ENCODE measurements at regions of chr3 and their contacts with region 1.

Region 1: DNA sequence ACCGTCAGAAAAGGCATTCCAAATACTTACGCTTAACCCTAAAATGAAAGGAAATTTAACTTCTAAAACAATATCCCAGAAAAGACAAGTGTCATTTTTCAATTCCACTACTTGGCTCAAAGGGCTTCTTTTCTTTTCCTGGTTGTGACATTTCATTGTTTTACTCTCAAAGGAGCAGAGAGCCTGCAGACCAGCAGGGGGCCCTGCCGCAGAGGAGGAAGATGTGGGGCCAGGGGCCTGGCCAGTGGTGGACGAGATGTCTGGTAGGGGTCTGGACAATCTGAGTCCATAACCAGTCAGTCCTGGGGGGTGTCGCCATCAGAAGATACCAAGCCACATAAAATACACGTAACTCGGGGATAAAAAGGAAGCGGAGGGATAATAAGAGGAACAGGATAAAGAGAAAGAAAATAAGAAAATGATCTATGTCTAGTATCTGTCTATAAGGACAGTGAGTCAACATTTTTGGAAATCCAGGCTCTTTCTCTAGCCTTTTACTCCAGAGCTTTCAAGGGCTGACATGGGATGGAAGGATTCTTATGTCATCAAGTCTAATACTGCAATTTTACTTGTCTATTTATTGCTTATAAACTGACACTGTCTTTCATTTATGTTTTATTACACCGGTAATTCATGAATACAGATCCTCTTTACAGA is 54.2 kb upstream of the ARHGEF3 start:
- DNase-seq: peak; percentile 64
- H3K4me3 Mint-ChIP-seq: no peak overlapping the region
- H3K27ac Mint-ChIP-seq: no peak overlapping the region
- H3K4me1 Mint-ChIP-seq: peaks cover 55% of the 10 kb centered on the region
- H3K27me3 Mint-ChIP-seq: no peaks in the 10 kb centered on the region

Region 2: DNA sequence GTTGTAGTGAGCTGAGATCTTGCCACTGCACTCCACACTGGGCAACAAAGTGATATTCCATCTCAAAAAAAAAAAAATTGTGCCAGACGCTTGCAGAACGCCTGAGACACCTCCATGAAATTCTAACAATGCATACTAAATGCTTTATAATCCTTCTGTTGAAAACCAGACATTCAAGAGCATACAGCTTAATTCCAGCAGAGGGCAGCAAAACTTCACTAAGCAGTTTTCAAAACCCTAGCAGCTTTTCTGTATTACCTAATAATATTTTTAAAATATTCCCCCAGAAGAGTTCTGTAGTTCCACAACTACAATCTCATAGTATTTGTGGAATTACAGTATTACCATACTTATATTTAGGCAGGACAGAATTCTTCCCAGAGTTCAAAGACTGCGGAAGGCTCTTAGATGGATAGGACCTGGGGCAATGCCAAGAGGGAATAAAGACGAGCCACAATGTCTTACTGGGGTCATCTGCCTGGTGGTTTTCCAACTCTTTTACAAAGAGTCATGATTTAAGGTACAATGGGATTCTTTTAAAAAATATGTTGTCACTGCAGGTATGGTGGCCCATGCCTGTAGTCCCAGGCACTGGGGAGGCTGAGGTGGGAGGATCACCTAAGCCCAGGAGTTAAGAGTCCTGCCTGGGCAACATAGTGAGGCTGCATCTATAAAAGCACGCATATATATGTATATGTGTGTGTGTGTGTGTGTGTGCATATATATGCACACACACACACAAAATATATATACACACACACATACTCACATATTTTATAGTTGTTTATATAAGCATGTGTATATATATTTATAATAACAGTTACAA is 153.3 kb before region 1 on chr3:
- CTCF ChIA-PET with region 1: interaction called, 4 read pairs
- POLR2A ChIA-PET with region 1: no interaction called
- intact Hi-C with region 1: loop called (anchors 5 kb)
- DNase-seq: peak; percentile 36
- H3K4me3 Mint-ChIP-seq: no peak overlapping the region
- H3K27ac Mint-ChIP-seq: no peak overlapping the region
- H3K4me1 Mint-ChIP-seq: peaks cover 11% of the 10 kb centered on the region
- H3K27me3 Mint-ChIP-seq: no peaks in the 10 kb centered on the region

Region 3: DNA sequence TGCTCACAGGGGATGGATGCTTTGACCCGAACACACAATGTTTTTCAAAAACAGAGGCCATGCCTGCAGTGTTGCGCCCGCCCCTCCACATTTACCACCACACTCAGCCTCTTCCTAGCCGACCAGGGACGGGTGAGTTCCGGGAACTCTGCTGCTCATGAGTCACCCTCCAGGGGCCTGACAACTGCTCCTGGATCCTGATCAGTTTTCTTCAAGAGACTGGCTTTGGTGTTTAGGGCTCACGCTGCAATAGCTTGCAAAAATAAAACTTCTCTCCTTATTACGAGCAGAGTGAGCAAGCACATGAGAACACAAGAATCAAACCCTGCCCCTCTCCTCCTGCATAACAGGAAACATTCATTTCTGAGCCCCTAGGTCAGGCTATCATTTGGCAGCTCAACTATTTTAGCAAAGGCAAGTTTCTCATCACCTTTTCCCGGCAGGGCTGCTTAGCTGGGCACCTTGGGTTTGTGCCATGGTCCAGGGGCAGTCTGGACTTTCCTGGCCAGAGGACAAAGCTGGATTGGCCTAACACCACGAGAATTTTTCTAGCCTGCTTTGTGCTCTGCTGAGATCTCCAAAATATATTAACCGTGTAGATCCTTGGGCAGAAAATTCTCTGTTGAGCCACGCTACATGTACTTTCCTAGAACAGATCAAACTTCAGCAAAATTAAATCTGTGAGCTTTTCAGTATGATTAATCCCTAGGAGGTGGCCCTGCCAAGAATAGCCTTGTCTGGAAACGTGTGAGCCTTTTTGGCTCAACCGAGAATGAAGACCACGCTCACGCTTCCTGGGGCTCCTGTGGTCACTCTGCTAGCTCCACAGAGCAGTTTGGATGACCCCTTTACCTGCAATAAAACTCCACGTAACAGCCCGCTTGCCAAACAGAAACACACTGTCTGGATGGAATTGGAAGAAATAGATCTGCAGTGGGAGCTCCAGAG is 151.8 kb after region 1 on chr3:
- CTCF ChIA-PET with region 1: no interaction called
- POLR2A ChIA-PET with region 1: no interaction called
- intact Hi-C with region 1: no loop called
- DNase-seq: peak; percentile 39
- H3K4me3 Mint-ChIP-seq: no peak overlapping the region
- H3K27ac Mint-ChIP-seq: no peak overlapping the region
- H3K4me1 Mint-ChIP-seq: peaks cover 4% of the 10 kb centered on the region
- H3K27me3 Mint-ChIP-seq: peaks cover 7% of the 10 kb centered on the region